ENCODE measurements at regions of chr6 and their contacts with region 1.

Region 1: DNA sequence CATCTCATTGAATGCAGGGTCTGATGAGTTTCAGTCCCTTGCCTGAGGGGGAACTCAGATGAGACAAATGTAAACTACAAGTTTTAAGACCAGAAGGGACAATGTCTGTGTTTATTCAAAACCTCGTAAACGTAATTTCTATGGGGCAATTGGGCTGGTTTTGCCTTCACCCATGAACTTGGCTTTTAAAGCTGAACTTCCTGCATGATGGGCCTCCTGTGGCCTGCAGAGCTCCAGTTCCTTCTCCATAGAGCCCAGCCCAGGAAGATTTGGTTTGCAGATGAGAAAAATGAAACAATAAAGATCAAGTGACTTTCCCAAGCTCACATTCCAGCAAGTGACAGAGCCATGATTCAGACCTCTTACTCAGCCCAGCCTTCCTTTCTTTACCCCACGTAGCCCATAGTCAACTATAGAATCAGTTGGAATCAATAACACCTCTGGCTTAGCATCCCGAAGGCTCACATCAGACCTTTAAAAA is 612.3 kb downstream of the UTRN start:
- DNase-seq: peak; percentile 94
- ATAC-seq: peak; percentile 85
- H3K4me3 ChIP-seq: peak overlapping the region; percentile 31; the same call in 1 of the 2 replicates
- H3K27ac ChIP-seq: peak overlapping the region; percentile 100
- H3K4me1 ChIP-seq: peaks cover 65% of the 10 kb centered on the region
- H3K27me3 ChIP-seq: no peaks in the 10 kb centered on the region
- CTCF ChIP-seq: no peak

Region 2: DNA sequence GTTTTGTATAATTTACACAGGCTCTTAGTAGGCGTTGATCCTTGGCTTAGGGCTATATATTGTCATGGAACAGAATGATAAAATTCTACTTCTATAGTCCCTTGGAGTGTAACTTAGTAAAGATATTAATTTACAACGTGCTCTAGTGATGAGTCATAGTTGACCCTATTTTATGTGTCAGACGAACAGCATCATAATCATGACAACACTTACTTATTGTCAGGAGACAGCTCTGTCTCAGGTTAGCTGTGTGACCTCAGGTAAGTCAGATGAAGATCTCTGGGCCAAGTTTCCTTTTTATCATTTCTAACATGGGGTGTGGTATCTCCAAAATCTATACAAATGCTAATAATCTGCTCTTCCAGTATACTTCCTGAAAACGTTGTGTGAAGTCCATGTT is 138.9 kb before region 1 on chr6:
- CTCF ChIA-PET with region 1: no interaction called
- POLR2A ChIA-PET with region 1: no interaction called
- intact Hi-C with region 1: loop called (anchors 5 kb)
- DNase-seq: peak; percentile 82
- ATAC-seq: peak; percentile 86
- H3K4me3 ChIP-seq: no peak overlapping the region
- H3K27ac ChIP-seq: peak overlapping the region; percentile 59
- H3K4me1 ChIP-seq: peaks cover 37% of the 10 kb centered on the region
- H3K27me3 ChIP-seq: no peaks in the 10 kb centered on the region
- CTCF ChIP-seq: no peak

Region 3: DNA sequence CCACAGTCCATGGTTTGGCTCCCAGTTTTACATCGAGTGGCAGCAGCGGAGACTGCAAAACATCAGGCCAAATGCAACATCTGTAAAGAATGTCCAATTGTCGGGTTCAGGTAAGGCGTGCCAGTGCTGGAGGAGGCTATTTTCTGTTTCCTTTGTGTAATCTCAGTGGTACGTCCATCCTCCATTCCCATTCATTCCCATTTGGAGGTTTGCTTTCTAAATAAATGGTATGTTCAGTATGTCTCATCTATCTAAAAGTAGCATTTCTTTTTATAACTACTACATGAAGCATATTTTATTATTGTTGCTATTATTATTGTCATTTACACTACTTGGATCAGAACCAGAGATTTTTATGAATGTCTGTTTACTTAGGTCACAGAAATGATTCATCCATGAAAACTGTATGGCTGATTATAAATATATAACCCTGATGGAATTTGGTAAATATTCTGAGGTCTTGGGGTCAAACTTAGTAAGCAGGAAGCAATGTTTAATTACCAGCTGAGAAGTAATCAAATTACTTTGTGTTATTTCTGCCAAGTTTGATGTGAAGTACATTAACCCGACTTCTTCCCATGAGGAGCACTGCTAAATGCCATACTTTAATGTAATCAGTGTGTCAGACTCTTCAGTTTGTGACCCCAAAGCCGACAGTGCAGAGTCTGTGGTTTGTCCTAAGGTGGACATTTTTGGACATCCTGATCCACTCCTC is 99.4 kb before region 1 on chr6:
- CTCF ChIA-PET with region 1: no interaction called
- POLR2A ChIA-PET with region 1: no interaction called
- intact Hi-C with region 1: loop called (anchors 1 kb)
- DNase-seq: peak; percentile 95
- ATAC-seq: peak; percentile 87
- H3K4me3 ChIP-seq: peak overlapping the region; percentile 16; the same call in 1 of the 2 replicates
- H3K27ac ChIP-seq: peak overlapping the region; percentile 83
- H3K4me1 ChIP-seq: peaks cover 27% of the 10 kb centered on the region
- H3K27me3 ChIP-seq: no peaks in the 10 kb centered on the region
- CTCF ChIP-seq: no peak